Activated B cell treated with CpG ODN at 0.5 μM for 24 hours (primary cell): ENCODE measurements at regions of chr5 and their contacts with region 1.

Region 1: GRCh38 chr5:131263648-131264450 is at the start of gene CDC42SE2:
- DNase-seq: peak; percentile 94
- ATAC-seq: peak; percentile 86
- H3K4me3 Mint-ChIP-seq: peak within 1 kb of the TSS; percentile 90
- H3K27ac Mint-ChIP-seq: peak within 1 kb of the TSS; percentile 96
- H3K4me1 Mint-ChIP-seq: peaks cover 45% of the 10 kb centered on the region
- H3K27me3 Mint-ChIP-seq: no peaks in the 10 kb centered on the region
- CTCF ChIP-seq: no peak
- total RNA-seq, gene CDC42SE2: 114 and 122 TPM in 2 replicates

Region 2: DNA sequence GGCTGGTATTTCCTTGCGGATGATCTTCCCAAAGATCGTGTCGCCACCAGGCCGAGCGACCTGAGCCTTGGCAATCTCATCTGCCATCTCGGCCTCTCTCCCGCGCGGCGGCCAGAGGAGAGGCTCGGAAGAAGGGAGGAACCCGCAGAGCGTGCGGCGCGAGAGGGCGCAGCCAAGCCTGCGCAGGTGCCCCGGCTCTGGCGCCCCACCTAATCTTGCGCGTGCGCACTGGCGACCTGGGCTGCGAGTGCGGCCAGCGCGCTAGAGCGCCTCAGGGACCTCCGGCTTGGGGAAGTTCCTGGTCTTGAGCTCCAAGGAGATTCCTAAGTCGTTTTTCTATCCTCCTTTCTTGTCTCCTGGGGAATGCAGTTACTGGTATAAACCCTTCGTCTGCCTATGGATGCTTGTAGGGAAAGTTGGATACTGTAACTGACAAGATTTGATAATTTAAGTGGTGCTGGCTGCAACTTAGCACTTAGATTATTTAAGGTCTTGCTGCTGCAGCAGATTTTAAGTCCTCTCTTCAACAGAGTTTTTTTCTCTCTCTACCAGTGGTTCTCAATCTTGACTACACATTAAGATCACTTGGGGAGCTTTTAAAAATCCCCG is 98.6 kb before region 1 on chr5 and contains the start of gene HINT1:
- CTCF ChIA-PET with region 1: interaction called, 5 read pairs
- POLR2A ChIA-PET with region 1: interaction called, 33 read pairs
- intact Hi-C with region 1: loop called (anchors 1 kb)
- DNase-seq: peak; percentile 91
- ATAC-seq: peak; percentile 83
- H3K4me3 Mint-ChIP-seq: peak within 1 kb of the TSS; percentile 96
- H3K27ac Mint-ChIP-seq: peak within 1 kb of the TSS; percentile 95
- H3K4me1 Mint-ChIP-seq: peaks cover 43% of the 10 kb centered on the region
- H3K27me3 Mint-ChIP-seq: no peaks in the 10 kb centered on the region
- CTCF ChIP-seq: no peak
- total RNA-seq, gene HINT1: 201 and 212 TPM in 2 replicates

Region 3: DNA sequence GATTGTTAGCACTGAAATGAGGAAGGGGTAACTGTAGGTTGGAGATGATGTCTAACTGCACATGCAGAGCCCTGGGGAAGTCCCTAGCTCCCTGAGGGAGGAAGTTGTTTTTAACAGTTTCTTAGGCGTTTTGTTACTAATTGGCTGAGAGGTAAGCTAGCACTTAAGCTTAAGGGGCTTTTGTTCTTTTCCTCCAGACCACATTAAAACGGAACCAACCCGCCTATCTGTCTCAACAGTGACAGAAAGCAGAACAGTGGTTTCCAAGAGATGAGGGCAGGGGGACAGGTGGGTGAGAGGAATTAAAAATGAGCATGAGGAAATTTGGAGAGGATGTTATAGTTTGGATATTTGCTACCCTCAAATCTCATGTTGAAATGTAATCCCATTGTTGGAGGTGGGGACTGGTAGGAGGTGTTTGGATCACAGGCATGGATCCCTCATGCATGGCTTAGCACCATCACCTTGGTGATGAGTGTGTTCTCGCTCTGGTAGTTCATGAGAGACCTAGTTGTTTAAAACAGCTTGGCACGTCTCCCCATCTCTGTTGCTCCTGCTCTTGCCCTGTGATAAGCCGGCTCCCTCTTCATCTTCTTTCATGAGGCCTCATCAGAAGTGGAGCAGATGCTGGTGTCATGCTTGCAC is 54.2 kb before region 1 on chr5:
- CTCF ChIA-PET with region 1: interaction called, 7 read pairs
- POLR2A ChIA-PET with region 1: interaction called, 91 read pairs
- intact Hi-C with region 1: loop called (anchors 1 kb)
- DNase-seq: peak; percentile 44
- ATAC-seq: peak; percentile 87
- H3K4me3 Mint-ChIP-seq: peak overlapping the region; percentile 82
- H3K27ac Mint-ChIP-seq: peak overlapping the region; percentile 99
- H3K4me1 Mint-ChIP-seq: peaks cover 63% of the 10 kb centered on the region
- H3K27me3 Mint-ChIP-seq: no peaks in the 10 kb centered on the region
- CTCF ChIP-seq: no peak

Region 4: DNA sequence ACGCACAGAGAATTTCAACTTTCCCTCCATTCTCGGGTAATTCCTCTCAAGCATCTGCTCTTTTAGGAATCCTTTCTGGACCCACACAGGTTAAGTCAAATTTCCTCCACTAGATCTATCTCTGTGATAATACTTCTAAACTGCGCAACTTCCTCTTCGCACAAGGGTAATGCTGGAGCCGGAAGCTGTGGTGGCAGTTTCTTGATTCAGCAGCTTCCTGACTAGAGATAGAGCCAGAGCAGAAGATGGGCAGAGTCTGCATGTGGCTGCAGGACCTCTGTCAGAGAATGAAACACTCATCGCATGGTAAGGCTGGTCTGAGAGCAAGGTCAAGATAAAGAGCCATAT is 11.1 kb before region 1 on chr5:
- CTCF ChIA-PET with region 1: interaction called, 28 read pairs
- POLR2A ChIA-PET with region 1: interaction called, 158 read pairs
- intact Hi-C with region 1: loop called (anchors 1 kb)
- DNase-seq: peak; percentile 52
- ATAC-seq: peak; percentile 86
- H3K4me3 Mint-ChIP-seq: peak overlapping the region; percentile 84
- H3K27ac Mint-ChIP-seq: peak overlapping the region; percentile 94
- H3K4me1 Mint-ChIP-seq: peaks cover 81% of the 10 kb centered on the region
- H3K27me3 Mint-ChIP-seq: no peaks in the 10 kb centered on the region
- CTCF ChIP-seq: no peak

Region 5: GRCh38 chr5:131281133-131281867 is 17.5 kb after region 1 on chr5:
- CTCF ChIA-PET with region 1: interaction called, 4 read pairs
- POLR2A ChIA-PET with region 1: interaction called, 94 read pairs
- intact Hi-C with region 1: no loop called
- DNase-seq: no peak
- ATAC-seq: no peak
- H3K4me3 Mint-ChIP-seq: peak overlapping the region; percentile 30
- H3K27ac Mint-ChIP-seq: peak overlapping the region; percentile 43
- H3K4me1 Mint-ChIP-seq: peaks cover 91% of the 10 kb centered on the region
- H3K27me3 Mint-ChIP-seq: no peaks in the 10 kb centered on the region
- CTCF ChIP-seq: no peak

Region 6: GRCh38 chr5:131394128-131394527 is 130.3 kb after region 1 on chr5:
- CTCF ChIA-PET with region 1: interaction called, 4 read pairs
- POLR2A ChIA-PET with region 1: interaction called, 8 read pairs
- intact Hi-C with region 1: loop called (anchors 1 kb)
- DNase-seq: no peak
- ATAC-seq: peak; percentile 93
- H3K4me3 Mint-ChIP-seq: peak overlapping the region; percentile 73
- H3K27ac Mint-ChIP-seq: peak overlapping the region; percentile 88
- H3K4me1 Mint-ChIP-seq: peaks cover 71% of the 10 kb centered on the region
- H3K27me3 Mint-ChIP-seq: no peaks in the 10 kb centered on the region
- CTCF ChIP-seq: no peak